Activated CD4-positive, alpha-beta T cell treated with anti-CD3 and anti-CD28 coated beads, Interleukin-2, amount 10 ng/mL, durations not matched to agents 7 days and 5 days (primary cell): ENCODE measurements at regions of chr1 and their contacts with region 1.

Region 1: DNA sequence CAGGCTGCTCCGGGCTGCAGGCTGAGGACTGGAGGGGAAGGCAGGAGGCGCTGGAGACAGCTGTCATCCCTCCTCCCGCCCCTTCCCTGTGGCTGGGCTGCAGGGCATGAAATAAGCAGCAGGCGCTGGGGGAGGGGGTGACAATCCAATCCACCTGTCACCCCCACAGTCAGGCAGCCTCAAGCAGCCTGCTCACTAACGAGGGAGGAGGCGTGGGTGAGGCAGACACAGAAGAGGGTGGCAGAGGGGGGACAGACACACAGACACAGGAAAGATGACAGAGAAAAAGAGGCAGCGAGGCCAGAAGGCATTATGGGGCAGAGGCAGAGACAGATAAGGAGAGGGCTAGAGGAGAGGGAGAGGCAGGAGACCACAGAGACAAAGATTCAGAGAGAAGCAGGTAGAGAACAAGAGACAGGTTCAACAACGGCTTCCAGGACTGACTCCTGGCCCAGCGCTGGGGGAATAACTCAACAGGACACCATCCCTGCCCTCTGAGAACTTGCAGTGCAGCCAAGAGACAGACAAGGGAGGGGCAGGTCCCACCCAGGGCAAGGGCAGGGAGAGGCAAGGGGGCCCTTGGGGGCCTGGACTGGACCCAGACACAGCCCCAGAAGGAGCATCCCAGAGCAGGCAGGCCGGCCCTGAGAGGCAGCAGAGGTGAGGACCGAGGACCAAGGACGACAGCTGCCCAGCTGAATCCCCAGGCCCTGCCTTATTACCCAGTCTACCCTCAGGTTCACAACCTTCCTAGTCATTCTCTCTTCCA is 11.2 kb downstream of the MEF2D start:
- DNase-seq: peak; percentile 25
- H3K4me3 Mint-ChIP-seq: peak overlapping the region; percentile 7
- H3K27ac Mint-ChIP-seq: peak overlapping the region; percentile 82
- H3K4me1 Mint-ChIP-seq: peaks cover 76% of the 10 kb centered on the region
- H3K27me3 Mint-ChIP-seq: no peaks in the 10 kb centered on the region

Region 2: DNA sequence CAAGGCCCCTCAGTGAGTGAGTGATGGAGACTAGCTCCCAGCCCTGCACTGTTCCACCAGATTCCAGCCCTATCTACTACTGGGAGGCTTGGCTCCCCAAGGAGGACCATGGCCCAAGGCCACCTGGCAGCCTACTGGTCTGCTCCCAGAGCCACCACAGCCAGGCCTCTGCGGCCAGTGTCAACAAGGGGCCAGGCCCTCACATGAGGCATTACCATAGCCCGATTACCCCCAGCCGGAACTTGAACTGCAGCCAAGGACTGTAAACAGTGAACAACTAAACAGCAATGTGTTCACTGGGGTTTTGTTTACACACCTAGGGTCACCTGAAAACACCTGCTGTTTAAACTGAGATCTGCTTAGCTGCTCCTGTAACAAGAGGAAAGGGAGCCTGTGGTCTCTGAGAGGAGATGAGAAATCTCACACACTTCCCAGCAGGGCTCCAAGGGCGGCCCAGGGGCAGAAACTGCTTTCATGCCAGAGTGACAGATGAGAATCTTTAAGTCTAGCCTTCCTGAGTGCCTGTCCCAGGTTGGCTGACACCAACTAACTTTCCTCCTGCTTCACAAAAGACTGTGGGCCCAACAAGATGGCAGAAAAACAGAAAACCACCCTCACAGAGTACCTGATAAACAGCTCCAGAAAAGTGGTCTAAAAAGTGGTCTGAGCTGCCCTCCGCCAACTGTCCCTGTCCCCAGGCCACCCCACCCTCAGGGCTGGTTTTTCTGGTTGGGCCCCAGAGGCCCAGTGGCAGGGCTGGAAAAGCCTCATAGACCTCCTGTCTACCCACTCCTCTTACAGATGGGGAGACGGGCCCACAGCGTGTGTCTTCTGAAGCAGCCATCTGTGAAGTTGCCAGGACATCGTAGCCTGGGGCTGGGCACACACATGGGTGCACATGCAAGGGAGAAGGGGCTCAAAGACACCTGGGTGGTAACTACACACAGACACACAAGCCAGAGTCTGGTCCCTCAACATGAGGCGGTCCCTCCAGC is 17.6 kb before region 1 on chr1:
- CTCF ChIA-PET with region 1: interaction called, 14 read pairs
- POLR2A ChIA-PET with region 1: no interaction called
- DNase-seq: no peak
- H3K4me3 Mint-ChIP-seq: no peak overlapping the region
- H3K27ac Mint-ChIP-seq: no peak overlapping the region
- H3K4me1 Mint-ChIP-seq: peaks cover 3% of the 10 kb centered on the region
- H3K27me3 Mint-ChIP-seq: no peaks in the 10 kb centered on the region

Region 3: DNA sequence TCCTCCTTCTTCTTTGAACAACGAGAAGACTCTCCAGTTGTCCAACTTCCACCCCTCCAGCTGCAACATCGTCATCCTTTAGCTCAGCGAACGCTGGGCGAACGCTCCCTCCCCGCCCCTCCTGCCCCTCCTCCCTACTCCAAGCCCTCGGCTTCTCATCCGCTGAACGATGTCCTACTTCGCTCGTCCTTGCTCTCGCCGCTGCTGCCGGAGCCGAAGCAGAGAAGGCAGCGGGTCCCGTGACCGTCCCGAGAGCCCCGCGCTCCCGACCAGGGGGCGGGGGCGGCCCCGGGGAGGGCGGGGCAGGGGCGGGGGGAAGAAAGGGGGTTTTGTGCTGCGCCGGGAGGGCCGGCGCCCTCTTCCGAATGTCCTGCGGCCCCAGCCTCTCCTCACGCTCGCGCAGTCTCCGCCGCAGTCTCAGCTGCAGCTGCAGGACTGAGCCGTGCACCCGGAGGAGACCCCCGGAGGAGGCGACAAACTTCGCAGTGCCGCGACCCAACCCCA is 152.5 kb after region 1 on chr1 and contains the start of gene BCAN:
- CTCF ChIA-PET with region 1: no interaction called
- POLR2A ChIA-PET with region 1: no interaction called
- DNase-seq: no peak
- H3K4me3 Mint-ChIP-seq: peak within 1 kb of the TSS; percentile 3
- H3K27ac Mint-ChIP-seq: no peak within 1 kb of the TSS
- H3K4me1 Mint-ChIP-seq: peaks cover 33% of the 10 kb centered on the region
- H3K27me3 Mint-ChIP-seq: peaks cover 77% of the 10 kb centered on the region
- total RNA-seq, gene BCAN: not detected